Posterior cingulate gyrus (tissue), 11 donors: ENCODE measurements at regions of chr7 and their contacts with region 1.

Region 1: DNA sequence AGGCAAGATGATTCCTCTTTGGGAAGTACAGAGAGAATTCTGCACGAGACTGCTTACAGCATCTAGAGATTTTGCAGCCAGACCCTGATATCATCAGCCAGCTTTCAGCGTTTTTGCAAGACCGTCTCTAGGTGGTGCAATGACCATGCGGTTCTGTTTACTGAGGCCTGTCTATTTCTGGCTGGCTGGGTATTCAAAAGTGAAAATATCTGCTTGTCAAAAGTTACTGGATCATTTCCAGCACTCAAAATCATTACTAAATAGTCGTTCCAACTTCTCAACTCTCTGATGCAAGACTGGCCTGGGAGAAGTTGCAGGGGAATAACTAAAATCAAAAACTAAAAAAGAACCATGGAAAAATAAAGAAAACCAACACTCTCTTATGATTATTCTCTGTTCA is 240.1 kb downstream of the ELMO1 start:
- DNase-seq: peak in 7 of 10 donors; percentile 50 to 93 (median 69)

Region 2: GRCh38 chr7:37495574-37496184 is 287.2 kb after region 1 on chr7:
- intact Hi-C with region 1: loop called (anchors 10 kb)
- DNase-seq: no peak

Region 3: DNA sequence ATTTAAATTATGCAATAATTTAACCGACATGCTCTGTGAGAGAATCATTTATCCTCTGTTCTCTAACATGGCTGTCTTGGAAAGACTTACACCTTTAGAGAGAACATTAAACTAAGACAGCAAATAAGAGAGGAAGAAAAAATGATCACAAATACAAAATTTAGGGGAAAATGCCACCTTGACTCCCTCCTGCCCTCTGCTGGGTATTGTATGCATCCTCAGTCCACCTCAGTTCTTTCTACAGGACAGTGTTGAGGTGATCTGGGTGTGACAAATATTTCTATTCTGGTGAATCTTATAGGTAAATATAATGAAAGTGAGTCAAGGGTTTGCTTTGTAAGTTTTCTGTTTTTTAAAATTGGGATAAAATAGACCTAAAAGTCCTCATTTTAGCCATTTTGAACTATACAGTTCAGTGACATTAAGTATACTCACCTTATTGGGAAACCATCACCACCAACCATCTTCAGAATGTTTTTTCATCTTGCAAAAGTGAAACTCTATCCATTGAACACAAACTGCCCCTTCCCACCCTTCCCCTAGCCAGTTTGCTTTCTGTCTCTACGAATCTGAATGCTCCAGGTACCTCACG is 301.6 kb after region 1 on chr7:
- intact Hi-C with region 1: loop called (anchors 5 kb)
- DNase-seq: peak in 1 of 10 donors; percentile 28

Region 4: GRCh38 chr7:37820708-37821468 is 612.4 kb after region 1 on chr7:
- intact Hi-C with region 1: no loop called
- DNase-seq: no peak